K562 (cell line): ENCODE measurements at regions of chr13 and their contacts with region 1.

Region 1: GRCh38 chr13:19863323-19864023 is at the start of gene ZMYM5:
- DNase-seq: peak; percentile 91 to 96 (median 93)
- ATAC-seq: peak; percentile 93
- H3K4me3 ChIP-seq: peak within 1 kb of the TSS; percentile 83
- H3K27ac ChIP-seq: peak within 1 kb of the TSS; percentile 91
- H3K4me1 ChIP-seq: peaks cover 15 to 20% of the 10 kb centered on the region in 2 experiments; a peak in 4 of 5 replicates
- H3K27me3 ChIP-seq: no peaks in the 10 kb centered on the region
- CTCF ChIP-seq: no peak
- EP300 ChIP-seq: no peak
- POLR2A ChIP-seq: peak; percentile 83
- RAD21 ChIP-seq: no peak
- polyA plus RNA-seq, gene ZMYM5: 6.5 to 7.7 TPM

Region 2: GRCh38 chr13:19782049-19782726 is 81.3 kb before region 1 on chr13:
- CTCF ChIA-PET with region 1: no interaction called
- POLR2A ChIA-PET with region 1: interaction called, 3 read pairs
- in situ Hi-C with region 1: no loop called
- intact Hi-C with region 1: loop called (anchors 10 kb)
- DNase-seq: peak; percentile 9 to 37 (median 18)
- ATAC-seq: peak; percentile 76
- H3K4me3 ChIP-seq: peak overlapping the region; percentile 90
- H3K27ac ChIP-seq: peak overlapping the region; percentile 95
- H3K4me1 ChIP-seq: peaks cover 3 to 5% of the 10 kb centered on the region in 2 experiments; a peak in 3 of 5 replicates
- H3K27me3 ChIP-seq: no peaks in the 10 kb centered on the region
- CTCF ChIP-seq: no peak
- EP300 ChIP-seq: no peak
- POLR2A ChIP-seq: no peak
- RAD21 ChIP-seq: no peak

Region 3: GRCh38 chr13:19959831-19960652 is 96.6 kb after region 1 on chr13:
- CTCF ChIA-PET with region 1: interaction called, 3 read pairs
- POLR2A ChIA-PET with region 1: no interaction called
- in situ Hi-C with region 1: no loop called
- intact Hi-C with region 1: loop called (anchors 5 kb)
- DNase-seq: peak; percentile 43 to 81 (median 54)
- ATAC-seq: peak; percentile 71
- H3K4me3 ChIP-seq: peak overlapping the region; percentile 72
- H3K27ac ChIP-seq: peak overlapping the region; percentile 83
- H3K4me1 ChIP-seq: peaks cover 0 to 14% of the 10 kb centered on the region in 2 experiments; a peak in 2 of 5 replicates
- H3K27me3 ChIP-seq: no peaks in the 10 kb centered on the region
- CTCF ChIP-seq: peak; percentile 80 to 99 (median 87)
- EP300 ChIP-seq: no peak
- POLR2A ChIP-seq: no peak
- RAD21 ChIP-seq: peak; percentile 26 to 46; a peak in 3 of 4 replicates

Region 4: DNA sequence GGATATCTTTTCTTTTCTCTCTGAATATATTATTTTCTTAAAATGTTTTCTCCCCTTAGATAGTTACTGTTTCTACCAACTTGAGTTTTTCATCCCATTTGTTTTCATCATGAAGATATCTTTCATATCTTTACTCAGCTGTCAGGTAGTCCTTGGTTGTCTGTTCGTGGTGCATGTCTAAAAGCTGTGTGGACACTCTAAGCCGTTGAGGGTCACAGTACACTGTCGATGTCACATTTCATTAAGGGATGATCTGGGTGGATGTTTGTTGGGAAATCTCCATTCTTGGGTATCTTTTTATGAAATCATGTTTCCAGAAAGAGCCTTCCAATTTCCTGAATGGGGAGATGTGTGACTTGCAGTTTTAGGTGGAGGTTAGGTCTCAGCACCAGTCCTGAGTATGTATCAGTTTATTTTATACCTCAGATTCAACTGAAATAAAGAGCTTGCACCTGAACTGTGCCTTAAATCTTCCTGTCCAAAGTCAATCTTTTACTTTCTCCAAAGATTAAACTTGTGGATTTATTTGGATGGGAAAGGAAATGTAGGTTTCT is 118.3 kb after region 1 on chr13:
- CTCF ChIA-PET with region 1: no interaction called
- POLR2A ChIA-PET with region 1: no interaction called
- in situ Hi-C with region 1: no loop called
- intact Hi-C with region 1: no loop called
- DNase-seq: peak in 1 of 4 experiments; percentile 8
- ATAC-seq: peak; percentile 75
- H3K4me3 ChIP-seq: no peak overlapping the region
- H3K27ac ChIP-seq: peak overlapping the region; percentile 3; the same call in 1 of the 3 replicates
- H3K4me1 ChIP-seq: peaks cover 4 to 8% of the 10 kb centered on the region in 2 experiments; a peak in 3 of 5 replicates
- H3K27me3 ChIP-seq: no peaks in the 10 kb centered on the region
- CTCF ChIP-seq: no peak
- EP300 ChIP-seq: no peak
- POLR2A ChIP-seq: no peak
- RAD21 ChIP-seq: no peak

Region 5: DNA sequence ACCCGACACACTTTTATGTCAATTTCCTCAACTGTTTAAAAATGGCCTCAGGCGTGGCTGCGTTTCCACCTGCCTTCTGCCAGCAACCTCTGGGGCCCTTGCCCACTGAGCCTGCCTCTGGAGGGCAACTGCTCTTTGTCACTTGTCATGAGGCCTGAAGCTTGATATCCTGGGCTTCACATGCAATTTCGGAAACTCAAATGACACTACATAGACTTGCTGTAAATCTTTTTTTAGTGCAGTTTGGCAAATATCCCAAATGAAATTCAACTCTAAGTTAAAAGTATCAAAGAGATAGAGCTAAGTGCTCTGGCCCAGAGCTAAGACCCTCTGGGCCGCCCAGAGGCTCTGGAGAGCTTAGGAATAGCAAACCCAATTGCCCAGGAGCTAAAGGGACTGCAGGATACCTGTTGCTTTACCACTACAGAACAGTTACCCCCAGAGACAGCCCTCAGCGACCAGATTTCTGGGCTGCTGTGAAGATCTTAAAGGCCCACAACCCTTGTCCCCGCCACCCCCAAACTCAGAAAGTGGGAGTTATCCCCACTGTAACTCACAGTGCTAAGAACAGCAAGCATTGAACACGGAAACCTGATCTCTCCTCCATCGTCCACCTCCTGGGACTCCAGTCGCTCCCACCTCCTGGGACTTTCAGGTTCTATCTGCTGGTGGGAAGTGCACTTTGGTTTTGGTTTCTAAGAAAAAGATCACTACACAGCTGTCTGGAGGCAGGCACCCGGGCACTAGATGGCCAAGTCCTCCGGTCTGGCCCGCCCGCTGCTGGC is 278.0 kb after region 1 on chr13:
- CTCF ChIA-PET with region 1: no interaction called
- POLR2A ChIA-PET with region 1: no interaction called
- in situ Hi-C with region 1: no loop called
- intact Hi-C with region 1: no loop called
- DNase-seq: no peak
- ATAC-seq: no peak
- H3K4me3 ChIP-seq: no peak overlapping the region
- H3K27ac ChIP-seq: no peak overlapping the region
- H3K4me1 ChIP-seq: peaks cover 0 to 14% of the 10 kb centered on the region in 2 experiments; a peak in 2 of 5 replicates
- H3K27me3 ChIP-seq: peaks cover 5 to 47% of the 10 kb centered on the region in 2 experiments; a peak in 3 of 5 replicates
- CTCF ChIP-seq: no peak
- EP300 ChIP-seq: no peak
- POLR2A ChIP-seq: no peak
- RAD21 ChIP-seq: no peak

Region 6: DNA sequence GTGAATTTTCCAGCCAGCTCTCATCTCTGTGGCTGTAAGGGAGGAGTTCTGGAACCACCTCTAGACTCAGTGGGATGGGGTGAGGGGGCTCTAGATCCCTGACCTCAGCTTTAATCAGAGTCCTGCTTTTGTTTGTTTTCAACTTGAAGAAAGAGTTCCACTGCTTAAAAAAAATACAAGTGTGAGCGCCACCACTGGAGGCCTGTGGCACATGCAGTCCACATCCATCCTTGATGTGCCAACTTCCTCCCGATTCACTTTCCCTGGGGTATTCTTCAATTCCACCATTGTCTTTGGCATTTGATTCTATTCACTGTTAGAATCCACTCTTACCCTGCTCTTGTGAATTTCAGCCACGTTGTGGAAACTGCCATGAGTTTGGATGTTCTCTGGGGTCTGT is 431.0 kb after region 1 on chr13:
- CTCF ChIA-PET with region 1: no interaction called
- POLR2A ChIA-PET with region 1: no interaction called
- in situ Hi-C with region 1: no loop called
- intact Hi-C with region 1: no loop called
- DNase-seq: no peak
- ATAC-seq: no peak
- H3K4me3 ChIP-seq: no peak overlapping the region
- H3K27ac ChIP-seq: no peak overlapping the region
- H3K4me1 ChIP-seq: no peaks in the 10 kb centered on the region; a peak in 1 of 5 replicates
- H3K27me3 ChIP-seq: peaks cover 0 to 11% of the 10 kb centered on the region in 2 experiments; a peak in 1 of 5 replicates
- CTCF ChIP-seq: peak in 2 of 3 experiments; percentile 21 to 32; a peak in 1 of 6 replicates
- EP300 ChIP-seq: no peak
- POLR2A ChIP-seq: no peak
- RAD21 ChIP-seq: no peak